GM10248 (cell line): ENCODE measurements at regions of chr3 and their contacts with region 1.

Region 1: DNA sequence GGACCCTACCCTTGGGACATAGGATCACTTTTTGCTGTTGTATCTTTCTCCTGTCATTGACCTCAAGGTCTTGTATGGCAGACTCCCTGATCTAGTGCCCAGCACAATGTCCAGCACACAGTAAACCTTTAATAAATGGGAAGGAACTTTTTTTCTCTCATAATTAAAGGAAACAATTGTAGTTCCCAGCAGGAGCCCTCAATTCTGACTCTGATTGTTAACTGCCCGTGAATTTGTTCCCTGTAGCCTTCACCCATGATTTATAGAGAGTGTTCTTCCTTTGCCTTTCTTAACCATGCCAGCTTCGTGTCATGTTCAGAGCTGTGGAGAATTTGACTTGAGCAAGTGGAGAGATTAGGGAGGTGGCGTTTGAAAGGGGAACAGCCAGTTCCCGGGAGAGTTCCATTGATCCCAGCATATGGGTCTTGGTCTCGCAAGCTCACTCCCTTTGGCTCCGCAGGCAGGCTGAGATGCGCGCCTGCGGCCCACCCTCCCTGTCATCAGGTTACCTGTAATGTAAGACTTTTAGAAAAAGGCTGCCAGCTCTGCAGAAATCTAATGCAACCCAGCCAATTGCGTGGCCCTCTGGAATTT is 182.6 kb downstream of the TP63 start:
- DNase-seq: no peak
- CTCF ChIP-seq: no peak

Region 2: DNA sequence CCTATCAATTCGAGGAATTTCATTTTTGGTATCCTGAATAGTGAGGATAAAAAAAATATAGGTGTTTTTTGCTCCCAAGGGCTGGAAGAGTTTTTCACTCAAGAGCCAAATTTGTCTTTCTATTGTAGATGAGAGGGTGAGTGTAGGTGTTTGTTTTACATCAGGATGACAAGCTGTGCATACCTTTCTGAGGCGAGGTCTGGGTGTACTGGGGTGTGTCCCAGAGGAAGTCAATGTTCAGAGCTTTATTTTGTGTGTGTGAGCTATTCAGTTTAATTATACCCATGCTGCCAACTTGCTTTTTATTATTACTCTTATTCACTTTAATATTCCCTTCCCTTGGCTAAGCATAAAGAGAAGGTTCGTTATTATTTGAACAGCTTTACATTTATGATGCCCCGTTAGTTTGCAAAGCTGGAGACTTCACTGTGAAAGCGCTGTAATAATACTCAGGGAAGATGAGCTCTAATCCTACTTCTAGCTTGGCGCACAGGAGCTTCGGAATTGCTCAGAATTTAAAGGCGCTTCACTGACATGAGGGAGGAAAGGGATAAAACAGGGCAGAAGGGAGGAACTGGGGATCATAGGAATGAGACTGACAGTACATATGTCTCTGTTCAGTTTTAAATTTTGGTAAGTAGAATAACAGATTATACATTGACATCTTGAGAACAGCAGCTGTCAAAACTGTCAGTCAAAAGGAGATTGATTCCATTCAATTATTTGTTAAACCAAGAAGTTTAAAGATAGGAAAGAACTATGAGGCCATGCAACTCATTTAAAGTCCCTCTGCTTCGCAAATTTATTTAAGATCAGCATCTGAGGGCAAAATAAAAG is 300.2 kb before region 1 on chr3:
- CTCF ChIA-PET with region 1: no interaction called
- POLR2A ChIA-PET with region 1: no interaction called
- DNase-seq: no peak
- CTCF ChIP-seq: no peak

Region 3: GRCh38 chr3:189824629-189825312 is 11.0 kb after region 1 on chr3:
- CTCF ChIA-PET with region 1: interaction called, 34 read pairs
- POLR2A ChIA-PET with region 1: no interaction called
- DNase-seq: no peak
- CTCF ChIP-seq: no peak